Dorsolateral prefrontal cortex (tissue), 120 donors: ENCODE measurements at regions of chr6 and their contacts with region 1.

Region 1: DNA sequence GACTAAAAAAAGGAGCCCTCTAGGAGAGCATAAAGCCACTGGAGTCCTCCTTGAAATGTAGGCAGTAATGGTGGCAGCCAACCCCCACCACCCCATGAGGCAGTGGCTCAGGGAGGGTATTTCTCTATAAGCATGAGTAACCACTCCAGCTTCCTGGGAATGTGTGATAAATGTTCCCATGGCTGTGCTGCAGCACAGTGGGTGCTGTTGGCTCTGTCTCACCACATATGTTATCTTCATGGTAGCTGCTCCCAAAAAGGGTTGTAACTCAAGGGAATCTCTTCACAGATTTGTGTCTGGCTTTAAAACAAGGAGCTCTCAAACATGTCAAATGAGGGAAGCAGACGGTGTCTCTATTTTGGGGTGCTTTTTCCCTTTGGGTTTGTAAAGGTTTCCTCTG is 7.5 kb upstream of the PHACTR1 start:
- DNase-seq: peak in 6 of 10 donors; percentile 46 to 67 (median 54)
- H3K4me3 ChIP-seq: no peak overlapping the region
- H3K27ac ChIP-seq: peak overlapping the region in 2 of 59 donors; percentile 25 to 48
- H3K27me3 ChIP-seq: peaks cover 0 to 20% (median 0%) of the 10 kb centered on the region in 45 donors
- CTCF ChIP-seq: no peak

Region 2: DNA sequence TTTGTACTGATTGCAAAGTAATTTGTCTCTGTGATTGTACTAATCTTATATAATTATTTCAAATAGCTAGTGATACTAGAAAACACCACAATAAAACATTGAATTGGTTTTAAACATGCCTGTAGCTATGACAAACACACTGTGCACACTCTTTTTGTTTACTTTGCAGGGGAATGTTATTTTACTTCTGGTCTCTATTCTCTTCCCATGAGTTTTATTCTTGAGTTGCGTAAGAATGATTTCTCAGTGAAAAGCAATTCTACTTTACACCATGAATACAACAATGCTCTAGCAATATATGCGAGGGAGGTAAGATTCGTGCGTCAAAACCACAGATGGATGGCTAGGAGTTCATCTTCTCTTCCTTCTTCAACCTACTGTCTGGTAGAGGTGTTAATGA is 60.9 kb before region 1 on chr6:
- intact Hi-C with region 1: loop called in 1 of 2 experiments (anchors 5 kb)
- DNase-seq: no peak
- H3K4me3 ChIP-seq: no peak overlapping the region
- H3K27ac ChIP-seq: no peak overlapping the region
- H3K27me3 ChIP-seq: no peaks in the 10 kb centered on the region
- CTCF ChIP-seq: no peak